HCT116 (cell line): ENCODE measurements at regions of chr17 and their contacts with region 1.

Region 1: DNA sequence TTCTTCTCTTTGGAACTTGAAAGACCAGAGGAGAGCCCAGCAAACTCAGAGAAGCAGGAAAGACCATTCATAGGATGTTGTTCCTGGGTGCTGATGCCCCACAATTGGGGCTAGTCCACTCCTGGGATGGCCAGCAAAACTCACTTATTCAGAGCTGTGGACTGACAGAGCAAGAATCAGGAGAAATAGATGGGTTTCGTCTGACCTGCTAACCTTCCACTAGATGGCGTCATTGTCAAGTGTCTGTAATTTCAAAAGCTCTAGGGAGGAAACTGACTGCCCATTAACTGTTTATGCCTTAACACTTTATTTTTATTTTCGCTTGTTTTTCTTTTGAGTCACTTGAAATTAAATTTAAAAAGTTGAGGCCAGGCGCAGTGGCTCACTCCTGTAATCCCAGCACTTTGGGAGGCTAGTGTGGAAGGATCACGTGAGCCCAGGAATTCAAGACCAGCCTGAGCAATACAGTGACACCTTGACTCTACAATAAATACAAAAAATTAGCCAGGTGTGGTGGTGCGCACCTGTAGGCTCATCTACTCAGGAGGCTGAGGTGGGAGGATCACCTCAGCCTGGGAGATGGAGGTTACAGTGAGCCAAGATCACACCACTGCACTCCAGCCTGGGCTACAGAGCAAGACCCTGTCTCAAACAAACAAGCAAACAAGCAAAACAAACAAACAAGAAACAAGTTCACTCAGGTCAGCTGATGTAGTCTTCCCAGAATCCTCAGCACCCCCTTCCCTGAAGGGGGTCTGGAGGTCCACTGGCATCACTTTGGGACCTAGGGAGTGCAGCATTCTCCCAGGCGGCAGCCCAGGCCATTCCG is 28.6 kb upstream of the MILR1 start:
- DNase-seq: peak; percentile 81
- ATAC-seq: peak; percentile 86
- H3K4me3 ChIP-seq: no peak overlapping the region
- H3K27ac ChIP-seq: no peak overlapping the region
- H3K4me1 ChIP-seq: peaks cover 3 to 18% of the 10 kb centered on the region in 2 experiments; a peak in 2 of 4 replicates
- H3K27me3 ChIP-seq: no peaks in the 10 kb centered on the region
- CTCF ChIP-seq: peak; percentile 85 to 95 (median 92)
- POLR2A ChIP-seq: no peak
- RAD21 ChIP-seq: peak; percentile 99

Region 2: GRCh38 chr17:64145757-64146417 is 274.5 kb before region 1 on chr17:
- CTCF ChIA-PET with region 1: interaction called, 6 read pairs
- POLR2A ChIA-PET with region 1: interaction called, 3 read pairs
- RAD21 ChIA-PET with region 1: no interaction called
- intact Hi-C with region 1: loop called (anchors 5 kb)
- DNase-seq: peak; percentile 100
- ATAC-seq: peak; percentile 88
- H3K4me3 ChIP-seq: peak overlapping the region; percentile 74 to 88
- H3K27ac ChIP-seq: peak overlapping the region; percentile 95
- H3K4me1 ChIP-seq: peaks cover 6 to 29% of the 10 kb centered on the region in 2 experiments; a peak in 3 of 4 replicates
- H3K27me3 ChIP-seq: no peaks in the 10 kb centered on the region
- CTCF ChIP-seq: no peak
- POLR2A ChIP-seq: peak; percentile 100
- RAD21 ChIP-seq: no peak

Region 3: DNA sequence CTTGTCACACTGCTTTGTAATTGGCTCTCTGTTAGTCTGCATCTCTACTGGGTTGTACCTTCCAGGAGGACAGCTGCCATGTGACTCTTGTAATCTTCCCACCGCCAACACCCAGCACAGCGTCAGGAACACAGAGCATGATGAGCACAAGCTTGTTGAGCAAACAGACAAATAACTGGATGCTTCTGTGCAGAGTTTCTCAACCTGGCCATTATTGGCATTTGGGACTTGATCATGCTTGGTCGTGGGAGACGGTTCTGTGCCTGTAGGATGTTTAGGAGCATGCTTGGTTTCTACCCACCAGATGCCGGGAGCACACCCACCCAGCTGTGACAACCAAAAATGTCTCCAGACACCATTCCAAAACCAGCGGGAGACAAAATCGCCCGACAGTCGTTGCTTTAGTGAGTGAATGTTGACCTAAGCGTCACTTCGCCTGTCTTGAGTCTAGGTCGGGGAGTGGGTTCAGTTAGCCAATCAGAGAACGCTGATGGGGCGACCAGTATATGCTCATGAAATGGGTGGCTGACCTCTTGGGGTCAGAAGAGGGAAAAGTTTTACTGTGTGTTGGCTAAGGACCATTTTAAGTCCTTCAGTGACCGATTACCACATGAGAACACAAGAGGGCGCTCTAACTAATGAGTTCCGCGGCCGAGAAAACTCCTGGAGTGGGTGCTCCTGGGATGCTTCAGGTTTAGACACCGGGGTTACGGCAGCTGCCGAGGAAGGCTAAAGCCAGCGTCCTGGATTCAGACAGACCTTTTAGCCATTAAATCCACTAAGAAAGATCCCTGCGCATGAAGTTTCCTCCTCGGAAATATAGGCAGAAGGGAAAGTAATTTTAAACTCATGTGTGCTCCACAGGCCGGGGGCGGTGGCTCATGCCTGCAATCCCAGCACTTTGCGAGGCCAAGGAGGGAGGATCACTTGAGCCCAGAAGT is 99.5 kb before region 1 on chr17:
- CTCF ChIA-PET with region 1: interaction called, 57 read pairs
- POLR2A ChIA-PET with region 1: no interaction called
- RAD21 ChIA-PET with region 1: interaction called, 3 to 4 read pairs
- intact Hi-C with region 1: loop called (anchors 1 kb)
- DNase-seq: peak; percentile 90
- ATAC-seq: peak; percentile 84
- H3K4me3 ChIP-seq: peak overlapping the region; percentile 22 to 26; a peak in 3 of 4 replicates
- H3K27ac ChIP-seq: no peak overlapping the region
- H3K4me1 ChIP-seq: peaks cover 0 to 5% of the 10 kb centered on the region in 2 experiments; a peak in 1 of 4 replicates
- H3K27me3 ChIP-seq: no peaks in the 10 kb centered on the region
- CTCF ChIP-seq: peak; percentile 83 to 96 (median 94)
- POLR2A ChIP-seq: no peak
- RAD21 ChIP-seq: peak; percentile 96

Region 4: DNA sequence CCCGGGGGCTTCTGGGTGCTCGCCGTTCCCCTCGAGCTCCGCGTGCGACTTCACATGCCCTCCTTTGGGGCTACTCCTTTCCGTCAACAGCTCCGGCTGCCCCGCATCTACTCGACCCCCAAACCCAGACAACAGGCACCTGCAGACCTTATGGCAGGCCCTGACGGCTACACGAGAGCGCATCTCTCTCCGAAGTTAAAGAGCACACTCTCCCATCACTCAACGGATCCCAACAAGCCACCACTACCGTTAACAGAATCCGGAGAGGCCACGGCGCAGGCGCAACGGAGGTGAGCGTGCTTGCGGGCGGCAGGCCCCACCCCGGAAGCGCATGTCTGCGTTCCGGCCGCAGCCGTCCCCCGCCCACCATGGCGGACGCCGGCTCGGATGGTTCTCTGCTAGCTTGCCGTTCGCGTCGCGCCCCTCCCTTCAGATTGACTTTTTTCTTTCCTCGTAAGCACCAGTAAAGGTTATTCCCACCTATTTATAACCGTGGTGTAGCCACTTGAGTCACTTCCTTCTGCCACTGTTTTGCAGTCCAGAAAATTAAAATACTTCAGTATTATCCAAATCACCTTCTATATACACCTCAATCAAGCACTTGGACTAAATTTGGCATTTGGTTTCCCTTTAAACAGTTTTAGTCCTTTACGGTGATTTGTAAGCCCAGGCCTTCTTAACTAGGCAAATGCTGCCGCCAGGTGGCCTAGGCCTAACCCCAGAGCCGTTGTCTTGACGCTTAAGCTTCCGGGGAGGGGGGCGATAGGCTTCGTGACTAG is 76.6 kb after region 1 on chr17 and contains the start of gene POLG2:
- CTCF ChIA-PET with region 1: interaction called, 168 read pairs
- POLR2A ChIA-PET with region 1: interaction called, 4 read pairs
- RAD21 ChIA-PET with region 1: interaction called in 1 of 2 experiments, 5 read pairs
- intact Hi-C with region 1: no loop called
- DNase-seq: peak; percentile 87
- ATAC-seq: peak; percentile 88
- H3K4me3 ChIP-seq: peak within 1 kb of the TSS; percentile 73 to 78
- H3K27ac ChIP-seq: peak within 1 kb of the TSS; percentile 79
- H3K4me1 ChIP-seq: peaks cover 10 to 52% of the 10 kb centered on the region in 2 experiments; a peak in 3 of 4 replicates
- H3K27me3 ChIP-seq: no peaks in the 10 kb centered on the region
- CTCF ChIP-seq: peak; percentile 69 to 81 (median 72); a peak in 5 of 6 replicates
- POLR2A ChIP-seq: peak; percentile 96
- RAD21 ChIP-seq: peak; percentile 75
- total RNA-seq, gene POLG2: 51.5 TPM

Region 5: DNA sequence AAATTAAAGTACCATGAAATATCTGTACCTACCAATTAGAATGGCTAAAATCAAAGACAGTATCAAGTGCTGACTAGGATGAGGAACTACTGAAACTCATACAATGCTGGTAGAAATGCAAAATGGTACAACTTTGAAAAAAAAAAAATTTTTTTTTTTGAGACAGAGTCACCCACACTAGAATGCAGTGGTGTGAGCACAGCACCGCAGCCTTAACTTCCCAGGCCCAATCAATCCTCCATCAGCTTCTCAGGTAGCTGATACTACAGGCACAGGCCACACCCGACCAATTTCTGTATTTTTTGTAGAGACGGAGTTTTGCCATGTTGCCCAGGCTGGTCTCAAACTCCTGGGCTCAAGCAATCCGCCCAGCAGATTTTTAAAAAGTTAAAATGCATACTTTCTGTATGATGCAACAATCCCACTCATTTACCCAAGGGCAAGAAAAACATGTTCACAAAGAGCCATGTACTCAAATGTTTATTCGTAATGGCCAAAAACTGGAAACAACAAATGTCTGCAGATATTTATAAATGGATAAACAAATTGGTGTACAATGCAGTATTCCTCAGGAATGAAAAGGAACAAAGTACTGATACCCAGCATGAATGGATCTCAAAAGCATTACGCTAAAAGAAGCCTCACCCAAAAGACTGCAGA is 233.1 kb after region 1 on chr17:
- CTCF ChIA-PET with region 1: interaction called, 8 read pairs
- POLR2A ChIA-PET with region 1: no interaction called
- RAD21 ChIA-PET with region 1: no interaction called
- intact Hi-C with region 1: loop called (anchors 1 kb)
- DNase-seq: no peak
- ATAC-seq: no peak
- H3K4me3 ChIP-seq: no peak overlapping the region
- H3K27ac ChIP-seq: peak overlapping the region; percentile 17; the same call in 1 of the 2 replicates
- H3K4me1 ChIP-seq: peaks cover 80 to 96% of the 10 kb centered on the region in 2 experiments
- H3K27me3 ChIP-seq: no peaks in the 10 kb centered on the region
- CTCF ChIP-seq: no peak
- POLR2A ChIP-seq: no peak
- RAD21 ChIP-seq: no peak